IMR-90 (cell line): ENCODE measurements at regions of chr7 and their contacts with region 1.

Region 1: GRCh38 chr7:81457852-81458522 is 311.9 kb downstream of the HGF start:
- DNase-seq: peak; percentile 56
- ATAC-seq: peak; percentile 42; the same call in 1 of the 2 replicates
- H3K4me3 ChIP-seq: no peak overlapping the region
- H3K27ac ChIP-seq: no peak overlapping the region
- H3K4me1 ChIP-seq: no peaks in the 10 kb centered on the region
- H3K27me3 ChIP-seq: peaks cover 2% of the 10 kb centered on the region; the same call in 1 of the 2 replicates
- CTCF ChIP-seq: peak; percentile 66
- POLR2A ChIP-seq: no peak
- RAD21 ChIP-seq: peak; percentile 66

Region 2: GRCh38 chr7:81469869-81470723 is 12.1 kb after region 1 on chr7:
- CTCF ChIA-PET with region 1: interaction called, 12 read pairs
- POLR2A ChIA-PET with region 1: no interaction called
- dilution Hi-C with region 1: no loop called
- in situ Hi-C with region 1: no loop called
- intact Hi-C with region 1: no loop called
- DNase-seq: peak; percentile 81
- ATAC-seq: peak; percentile 94
- H3K4me3 ChIP-seq: no peak overlapping the region
- H3K27ac ChIP-seq: no peak overlapping the region
- H3K4me1 ChIP-seq: no peaks in the 10 kb centered on the region
- H3K27me3 ChIP-seq: no peaks in the 10 kb centered on the region
- CTCF ChIP-seq: peak; percentile 83
- POLR2A ChIP-seq: no peak
- RAD21 ChIP-seq: peak; percentile 89

Region 3: DNA sequence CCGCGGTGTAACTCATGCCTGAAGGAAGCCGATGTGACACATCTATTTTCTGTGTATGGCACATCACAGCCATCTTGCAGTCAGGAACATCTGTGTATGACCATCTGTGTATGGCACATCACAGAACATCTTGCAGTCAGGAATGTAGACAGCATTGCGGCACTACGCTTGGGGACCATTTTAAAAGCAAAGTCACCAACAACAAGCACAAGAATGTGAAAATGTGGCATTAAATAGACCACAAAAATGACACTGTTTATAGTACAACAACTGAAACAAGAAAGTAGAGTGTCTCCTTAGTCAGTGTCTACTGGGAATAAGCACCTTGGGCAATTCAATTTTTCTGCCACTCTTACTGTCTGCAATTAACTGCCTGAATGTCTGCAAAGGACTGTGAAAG is 187.4 kb after region 1 on chr7:
- CTCF ChIA-PET with region 1: no interaction called
- POLR2A ChIA-PET with region 1: no interaction called
- dilution Hi-C with region 1: no loop called
- in situ Hi-C with region 1: no loop called
- intact Hi-C with region 1: no loop called
- DNase-seq: no peak
- ATAC-seq: no peak
- H3K4me3 ChIP-seq: no peak overlapping the region
- H3K27ac ChIP-seq: peak overlapping the region; percentile 16; the same call in 1 of the 2 replicates
- H3K4me1 ChIP-seq: peaks cover 2% of the 10 kb centered on the region; the same call in 1 of the 2 replicates
- H3K27me3 ChIP-seq: no peaks in the 10 kb centered on the region
- CTCF ChIP-seq: no peak
- POLR2A ChIP-seq: no peak
- RAD21 ChIP-seq: no peak

Region 4: GRCh38 chr7:81990395-81990794 is 532.4 kb after region 1 on chr7:
- CTCF ChIA-PET with region 1: no interaction called
- POLR2A ChIA-PET with region 1: no interaction called
- dilution Hi-C with region 1: no loop called
- in situ Hi-C with region 1: no loop called
- intact Hi-C with region 1: no loop called
- DNase-seq: peak; percentile 83
- ATAC-seq: no peak
- H3K4me3 ChIP-seq: no peak overlapping the region
- H3K27ac ChIP-seq: no peak overlapping the region
- H3K4me1 ChIP-seq: no peaks in the 10 kb centered on the region
- H3K27me3 ChIP-seq: no peaks in the 10 kb centered on the region
- CTCF ChIP-seq: no peak
- POLR2A ChIP-seq: no peak
- RAD21 ChIP-seq: no peak